Panc1 (cell line): ENCODE measurements at regions of chr20 and their contacts with region 1.

Region 1: DNA sequence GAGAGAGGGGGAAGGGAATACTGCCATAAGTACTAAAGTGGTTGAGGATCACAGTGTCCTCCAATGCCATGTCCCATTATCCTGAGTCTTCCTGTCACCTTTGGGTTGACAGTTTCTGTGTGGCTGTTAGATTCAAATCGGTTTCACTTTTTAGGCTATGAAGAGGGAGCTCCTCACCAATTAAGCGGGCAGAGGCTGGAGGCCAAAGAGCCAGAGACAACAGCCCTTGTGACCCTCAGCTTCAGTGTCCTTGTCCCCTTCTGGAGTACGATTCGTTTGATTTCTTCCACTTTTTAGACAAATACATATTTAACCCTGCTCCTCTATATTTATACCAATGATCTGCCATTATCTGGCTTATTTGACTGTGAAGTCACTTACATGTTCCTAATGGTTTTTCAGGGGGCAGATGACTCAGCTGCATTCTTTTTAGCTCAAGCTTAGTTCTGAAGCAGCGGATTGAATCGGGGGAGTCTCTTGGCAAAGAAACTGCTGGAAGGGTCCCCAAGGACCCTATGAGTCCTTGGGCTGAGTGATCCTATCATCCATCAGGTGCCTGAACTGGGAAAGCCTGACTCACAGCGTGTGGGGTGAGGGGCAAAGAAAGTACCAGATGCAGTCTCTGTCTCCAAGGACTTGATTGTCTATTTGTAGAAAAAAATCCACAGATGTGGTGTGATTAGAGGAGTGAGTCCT is 18.2 kb downstream of the FERMT1 start:
- DNase-seq: no peak
- ATAC-seq: no peak
- H3K4me3 ChIP-seq: no peak overlapping the region
- H3K27ac ChIP-seq: no peak overlapping the region
- H3K4me1 ChIP-seq: no peaks in the 10 kb centered on the region
- H3K27me3 ChIP-seq: no peaks in the 10 kb centered on the region; the same call in 1 of the 2 replicates
- CTCF ChIP-seq: no peak

Region 2: DNA sequence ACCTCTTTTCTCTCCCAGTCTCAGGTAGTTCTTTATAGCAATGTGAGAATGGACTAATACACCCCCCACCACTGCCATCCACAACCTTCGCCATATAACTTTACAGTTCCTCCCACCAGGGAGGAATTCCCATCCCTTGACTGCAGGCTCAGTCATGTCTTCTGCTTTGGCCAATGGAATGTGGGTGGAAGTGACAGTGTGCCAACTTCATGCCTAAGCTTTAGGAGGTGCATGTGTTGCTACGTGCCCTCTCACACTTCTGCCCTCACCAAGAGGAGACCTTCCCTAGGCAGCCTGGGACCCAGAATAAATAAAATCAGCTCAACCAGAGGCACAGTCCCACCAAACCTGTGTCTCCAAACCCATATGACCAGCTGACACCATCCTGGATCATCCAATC is 17.8 kb before region 1 on chr20:
- CTCF ChIA-PET with region 1: no interaction called
- POLR2A ChIA-PET with region 1: interaction called, 15 read pairs
- in situ Hi-C with region 1: no loop called
- intact Hi-C with region 1: no loop called
- DNase-seq: no peak
- ATAC-seq: no peak
- H3K4me3 ChIP-seq: no peak overlapping the region
- H3K27ac ChIP-seq: no peak overlapping the region
- H3K4me1 ChIP-seq: no peaks in the 10 kb centered on the region
- H3K27me3 ChIP-seq: no peaks in the 10 kb centered on the region
- CTCF ChIP-seq: no peak